Activated B cell treated with CpG ODN at 0.5 μM for 24 hours (primary cell): ENCODE measurements at regions of chr19 and their contacts with region 1.

Region 1: GRCh38 chr19:29873024-29873800 is 61.4 kb downstream of the CCNE1 start:
- DNase-seq: peak; percentile 75
- ATAC-seq: peak; percentile 87
- H3K4me3 Mint-ChIP-seq: peak overlapping the region; percentile 70
- H3K27ac Mint-ChIP-seq: no peak overlapping the region
- H3K4me1 Mint-ChIP-seq: peaks cover 18% of the 10 kb centered on the region
- H3K27me3 Mint-ChIP-seq: peaks cover 20% of the 10 kb centered on the region
- CTCF ChIP-seq: no peak

Region 2: GRCh38 chr19:29694669-29695627 is 178.3 kb before region 1 on chr19:
- CTCF ChIA-PET with region 1: no interaction called
- POLR2A ChIA-PET with region 1: no interaction called
- intact Hi-C with region 1: loop called (anchors 1 kb)
- DNase-seq: peak; percentile 69
- ATAC-seq: peak; percentile 96
- H3K4me3 Mint-ChIP-seq: no peak overlapping the region
- H3K27ac Mint-ChIP-seq: no peak overlapping the region
- H3K4me1 Mint-ChIP-seq: peaks cover 19% of the 10 kb centered on the region
- H3K27me3 Mint-ChIP-seq: no peaks in the 10 kb centered on the region
- CTCF ChIP-seq: peak; percentile 76

Region 3: DNA sequence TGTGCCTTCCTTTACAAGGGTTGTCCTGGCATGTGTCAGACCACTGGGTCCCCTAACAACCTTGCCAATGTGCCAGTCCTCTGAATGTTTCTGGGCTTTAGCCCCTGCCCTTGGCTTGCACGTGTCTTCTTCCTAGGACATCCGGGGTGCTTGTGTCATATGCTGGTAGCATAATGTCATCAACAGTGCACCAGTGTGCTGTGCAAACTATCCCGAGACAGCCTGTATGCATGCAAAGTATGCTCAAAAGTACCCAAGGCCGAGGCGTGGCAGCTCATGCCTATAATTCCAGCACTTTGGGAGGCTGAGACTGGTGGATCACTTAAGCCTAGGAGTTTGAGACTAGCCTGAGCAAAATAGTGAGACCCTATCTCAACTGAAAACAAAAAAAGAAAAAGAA is 137.4 kb before region 1 on chr19:
- CTCF ChIA-PET with region 1: interaction called, 33 read pairs
- POLR2A ChIA-PET with region 1: interaction called, 4 read pairs
- intact Hi-C with region 1: loop called (anchors 1 kb)
- DNase-seq: no peak
- ATAC-seq: no peak
- H3K4me3 Mint-ChIP-seq: no peak overlapping the region
- H3K27ac Mint-ChIP-seq: no peak overlapping the region
- H3K4me1 Mint-ChIP-seq: no peaks in the 10 kb centered on the region
- H3K27me3 Mint-ChIP-seq: peaks cover 17% of the 10 kb centered on the region
- CTCF ChIP-seq: no peak

Region 4: GRCh38 chr19:29761575-29762232 is 111.5 kb before region 1 on chr19:
- CTCF ChIA-PET with region 1: interaction called, 31 read pairs
- POLR2A ChIA-PET with region 1: no interaction called
- intact Hi-C with region 1: loop called (anchors 1 kb)
- DNase-seq: no peak
- ATAC-seq: no peak
- H3K4me3 Mint-ChIP-seq: no peak overlapping the region
- H3K27ac Mint-ChIP-seq: no peak overlapping the region
- H3K4me1 Mint-ChIP-seq: peaks cover 4% of the 10 kb centered on the region
- H3K27me3 Mint-ChIP-seq: peaks cover 6% of the 10 kb centered on the region
- CTCF ChIP-seq: no peak

Region 5: GRCh38 chr19:29811125-29812079 is 61.8 kb before region 1 on chr19 and contains the start of gene CCNE1:
- CTCF ChIA-PET with region 1: no interaction called
- POLR2A ChIA-PET with region 1: no interaction called
- intact Hi-C with region 1: loop called (anchors 2 kb)
- DNase-seq: peak; percentile 95
- ATAC-seq: peak; percentile 94
- H3K4me3 Mint-ChIP-seq: peak within 1 kb of the TSS; percentile 85
- H3K27ac Mint-ChIP-seq: peak within 1 kb of the TSS; percentile 77
- H3K4me1 Mint-ChIP-seq: peaks cover 18% of the 10 kb centered on the region
- H3K27me3 Mint-ChIP-seq: no peaks in the 10 kb centered on the region
- CTCF ChIP-seq: no peak
- total RNA-seq, gene CCNE1: 3.4 and 4.1 TPM in 2 replicates

Region 6: DNA sequence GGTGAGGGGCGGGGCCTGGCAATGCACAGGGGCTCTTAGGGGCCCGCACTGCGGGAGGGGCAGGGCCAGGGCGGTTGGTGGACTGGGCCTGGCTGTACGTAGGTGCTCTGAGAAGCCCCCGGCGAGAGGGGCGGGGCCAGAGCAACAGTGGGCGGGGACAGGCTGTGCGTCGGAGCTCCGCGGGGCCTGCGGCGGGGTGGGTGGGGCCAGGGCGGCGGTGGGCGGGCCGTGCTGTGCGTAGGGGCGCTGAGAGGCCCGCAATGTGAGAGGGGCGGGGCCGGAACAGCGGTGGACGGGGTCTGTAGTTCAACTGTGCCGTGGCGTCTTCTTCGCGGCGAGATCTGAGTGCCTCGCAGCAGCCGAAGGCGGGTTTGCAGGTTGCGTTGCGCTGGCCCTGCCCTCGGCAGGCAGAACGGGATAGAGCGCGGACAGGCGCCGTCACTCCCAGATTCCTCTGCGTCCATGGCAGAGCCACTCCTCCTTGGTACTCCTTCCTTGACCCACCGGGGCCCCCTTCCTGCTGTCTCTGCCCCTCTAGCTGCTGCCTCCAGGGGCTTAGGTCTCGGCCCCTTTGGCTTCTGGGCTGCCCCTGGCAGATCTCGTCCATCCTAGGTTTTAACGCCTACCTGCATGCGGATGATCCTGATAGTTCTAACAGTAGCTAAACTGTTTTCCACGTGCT is 28.2 kb before region 1 on chr19:
- CTCF ChIA-PET with region 1: interaction called, 3 read pairs
- POLR2A ChIA-PET with region 1: no interaction called
- intact Hi-C with region 1: loop called (anchors 2 kb)
- DNase-seq: peak; percentile 94
- ATAC-seq: peak; percentile 80
- H3K4me3 Mint-ChIP-seq: peak overlapping the region; percentile 86
- H3K27ac Mint-ChIP-seq: peak overlapping the region; percentile 68
- H3K4me1 Mint-ChIP-seq: peaks cover 12% of the 10 kb centered on the region
- H3K27me3 Mint-ChIP-seq: peaks cover 9% of the 10 kb centered on the region
- CTCF ChIP-seq: no peak

Region 7: GRCh38 chr19:30649934-30650614 is 776.9 kb after region 1 on chr19:
- CTCF ChIA-PET with region 1: no interaction called
- POLR2A ChIA-PET with region 1: no interaction called
- intact Hi-C with region 1: loop called (anchors 5 kb)
- DNase-seq: no peak
- ATAC-seq: no peak
- H3K4me3 Mint-ChIP-seq: no peak overlapping the region
- H3K27ac Mint-ChIP-seq: no peak overlapping the region
- H3K4me1 Mint-ChIP-seq: no peaks in the 10 kb centered on the region
- H3K27me3 Mint-ChIP-seq: peaks cover 3% of the 10 kb centered on the region
- CTCF ChIP-seq: peak; percentile 5